Common myeloid progenitor, CD34-positive (primary cell): ENCODE measurements at regions of chr17 and their contacts with region 1.

Region 1: GRCh38 chr17:48215583-48216139 is 108.1 kb downstream of the SNX11 start:
- DNase-seq: peak; percentile 19 to 33 (median 23)
- H3K4me3 ChIP-seq: no peak overlapping the region
- H3K27ac ChIP-seq: no peak overlapping the region
- H3K4me1 ChIP-seq: no peaks in the 10 kb centered on the region
- H3K27me3 ChIP-seq: no peaks in the 10 kb centered on the region

Region 2: GRCh38 chr17:48228721-48229120 is 13.1 kb after region 1 on chr17:
- CTCF ChIA-PET with region 1: interaction called, 35 read pairs
- POLR2A ChIA-PET with region 1: no interaction called
- DNase-seq: peak in 2 of 3 donors; percentile 23 to 40
- H3K4me3 ChIP-seq: no peak overlapping the region
- H3K27ac ChIP-seq: no peak overlapping the region
- H3K4me1 ChIP-seq: peaks cover 0 to 2% (median 0%) of the 10 kb centered on the region in 4 experiments
- H3K27me3 ChIP-seq: no peaks in the 10 kb centered on the region